ENCODE measurements at regions of chr6 and their contacts with region 1.

Region 1: GRCh38 chr6:11824986-11825385 is 46.4 kb upstream of the ADTRP start:
- DNase-seq: no peak
- H3K4me3 ChIP-seq: no peak overlapping the region
- H3K27ac ChIP-seq: no peak overlapping the region
- H3K4me1 ChIP-seq: peaks cover 0 to 8% (median 0%) of the 10 kb centered on the region in 4 donors
- H3K27me3 ChIP-seq: no peaks in the 10 kb centered on the region
- CTCF ChIP-seq: no peak
- EP300 ChIP-seq: no peak
- POLR2A ChIP-seq: no peak

Region 2: DNA sequence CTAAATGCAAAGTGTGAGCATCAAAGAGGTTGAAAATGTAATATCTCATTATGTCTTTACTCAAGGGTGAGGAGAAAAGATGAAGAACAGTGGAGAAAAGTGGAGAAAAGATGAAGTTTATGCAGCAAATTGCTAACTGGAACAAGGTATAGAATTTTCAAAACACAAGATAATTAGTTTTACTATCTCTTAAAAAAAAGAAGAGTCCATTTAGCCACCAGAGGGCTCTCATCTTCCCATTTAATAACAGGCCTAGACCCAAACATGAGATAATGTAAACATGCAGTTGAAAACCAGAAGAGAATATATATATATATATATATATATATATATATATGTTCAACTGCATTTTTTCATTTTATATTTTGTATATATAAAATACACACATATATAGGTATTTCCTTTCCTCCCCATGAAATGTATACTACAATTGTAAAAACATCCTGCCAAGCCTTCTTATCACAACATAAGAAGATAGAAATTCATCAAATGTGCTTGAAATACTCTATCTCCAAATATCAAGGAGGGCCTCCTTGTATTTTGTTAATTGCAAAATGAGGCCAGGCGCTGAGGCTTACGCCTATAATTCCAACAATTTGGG is 124.8 kb before region 1 on chr6:
- in situ Hi-C with region 1: loop called in 1 of 4 experiments (anchors 25 kb)
- intact Hi-C with region 1: no loop called
- DNase-seq: no peak
- H3K4me3 ChIP-seq: no peak overlapping the region
- H3K27ac ChIP-seq: no peak overlapping the region
- H3K4me1 ChIP-seq: peaks cover 0 to 14% (median 7%) of the 10 kb centered on the region in 4 donors
- H3K27me3 ChIP-seq: no peaks in the 10 kb centered on the region
- CTCF ChIP-seq: peak; percentile 48 to 55 (median 53)
- EP300 ChIP-seq: no peak
- POLR2A ChIP-seq: no peak

Region 3: DNA sequence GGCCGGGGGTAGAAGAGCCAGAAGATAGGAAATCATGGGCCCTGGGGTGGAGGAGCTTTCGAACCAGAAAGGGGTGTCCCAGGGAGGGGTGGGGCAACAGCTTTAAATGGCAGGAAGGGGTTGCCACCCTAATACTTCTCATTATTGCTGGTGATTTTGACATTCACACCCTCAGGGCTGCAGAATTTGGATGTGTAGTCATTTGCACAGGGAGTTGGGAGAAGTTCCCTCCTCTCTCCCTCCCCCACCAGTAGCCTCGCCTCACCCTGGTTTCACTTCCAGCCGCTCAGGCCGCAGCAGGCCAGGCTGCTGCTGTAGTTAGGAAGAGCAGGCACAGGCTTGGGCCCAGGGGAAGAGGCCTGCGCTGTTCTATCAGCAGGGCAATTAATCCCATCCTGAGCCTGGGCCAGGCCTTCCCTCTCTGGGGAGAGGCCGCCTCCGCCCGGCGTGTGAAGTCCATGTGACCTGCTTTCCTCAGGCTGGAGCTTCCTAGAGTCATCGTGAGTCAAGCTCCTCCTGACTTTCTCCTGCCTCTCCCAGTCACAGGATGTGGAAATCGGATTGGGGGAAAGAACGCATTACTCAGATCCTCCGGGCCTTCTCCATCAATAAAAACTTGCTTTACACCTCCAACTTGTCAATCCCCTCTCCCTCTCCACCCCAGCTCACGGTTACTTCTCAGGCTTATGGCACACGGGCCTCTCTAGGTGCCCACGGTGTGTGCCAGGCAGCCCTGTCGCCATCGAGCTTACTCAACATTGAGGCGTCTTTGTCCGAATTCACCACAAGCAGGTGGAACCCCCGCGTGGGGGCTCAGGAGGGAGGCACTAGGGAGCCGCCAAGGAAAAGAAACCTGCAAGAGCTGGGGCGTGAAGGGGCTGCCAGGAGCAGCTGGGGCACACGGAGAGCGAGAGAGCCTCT is 54.2 kb before region 1 on chr6:
- in situ Hi-C with region 1: no loop called
- intact Hi-C with region 1: no loop called
- DNase-seq: peak; percentile 91
- H3K4me3 ChIP-seq: peak overlapping the region in 1 of 4 donors; percentile 1
- H3K27ac ChIP-seq: peak overlapping the region; percentile 80 to 90 (median 88)
- H3K4me1 ChIP-seq: peaks cover 15 to 44% (median 31%) of the 10 kb centered on the region in 4 donors
- H3K27me3 ChIP-seq: no peaks in the 10 kb centered on the region
- CTCF ChIP-seq: no peak
- EP300 ChIP-seq: no peak
- POLR2A ChIP-seq: peak; percentile 72

Region 4: DNA sequence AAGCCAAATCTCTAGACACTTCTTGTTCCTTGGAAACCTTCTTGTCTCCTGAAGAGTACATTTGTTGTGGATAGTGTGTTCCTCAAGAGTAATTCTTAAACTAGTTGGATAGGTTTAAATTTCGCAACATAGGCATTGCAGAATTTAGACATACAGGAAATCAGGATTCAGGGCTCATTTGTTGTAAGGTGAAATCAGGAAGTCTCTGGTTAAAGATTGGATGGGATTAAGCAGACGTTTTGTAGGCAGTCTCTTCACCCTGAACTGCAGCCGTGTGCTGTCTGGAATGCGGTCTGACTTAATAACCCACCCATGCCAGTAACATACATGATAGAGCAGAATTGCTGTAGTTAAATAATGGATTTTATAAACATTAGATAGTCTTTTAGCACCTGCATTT is 208.8 kb after region 1 on chr6:
- in situ Hi-C with region 1: no loop called
- intact Hi-C with region 1: no loop called
- DNase-seq: no peak
- H3K4me3 ChIP-seq: no peak overlapping the region
- H3K27ac ChIP-seq: no peak overlapping the region
- H3K4me1 ChIP-seq: peaks cover 0 to 20% (median 5%) of the 10 kb centered on the region in 4 donors
- H3K27me3 ChIP-seq: no peaks in the 10 kb centered on the region
- CTCF ChIP-seq: no peak
- EP300 ChIP-seq: no peak
- POLR2A ChIP-seq: no peak

Measured in transverse colon (tissue), 4 donors.